HEK293T (cell line): ENCODE measurements at regions of chr5 and their contacts with region 1.

Region 1: DNA sequence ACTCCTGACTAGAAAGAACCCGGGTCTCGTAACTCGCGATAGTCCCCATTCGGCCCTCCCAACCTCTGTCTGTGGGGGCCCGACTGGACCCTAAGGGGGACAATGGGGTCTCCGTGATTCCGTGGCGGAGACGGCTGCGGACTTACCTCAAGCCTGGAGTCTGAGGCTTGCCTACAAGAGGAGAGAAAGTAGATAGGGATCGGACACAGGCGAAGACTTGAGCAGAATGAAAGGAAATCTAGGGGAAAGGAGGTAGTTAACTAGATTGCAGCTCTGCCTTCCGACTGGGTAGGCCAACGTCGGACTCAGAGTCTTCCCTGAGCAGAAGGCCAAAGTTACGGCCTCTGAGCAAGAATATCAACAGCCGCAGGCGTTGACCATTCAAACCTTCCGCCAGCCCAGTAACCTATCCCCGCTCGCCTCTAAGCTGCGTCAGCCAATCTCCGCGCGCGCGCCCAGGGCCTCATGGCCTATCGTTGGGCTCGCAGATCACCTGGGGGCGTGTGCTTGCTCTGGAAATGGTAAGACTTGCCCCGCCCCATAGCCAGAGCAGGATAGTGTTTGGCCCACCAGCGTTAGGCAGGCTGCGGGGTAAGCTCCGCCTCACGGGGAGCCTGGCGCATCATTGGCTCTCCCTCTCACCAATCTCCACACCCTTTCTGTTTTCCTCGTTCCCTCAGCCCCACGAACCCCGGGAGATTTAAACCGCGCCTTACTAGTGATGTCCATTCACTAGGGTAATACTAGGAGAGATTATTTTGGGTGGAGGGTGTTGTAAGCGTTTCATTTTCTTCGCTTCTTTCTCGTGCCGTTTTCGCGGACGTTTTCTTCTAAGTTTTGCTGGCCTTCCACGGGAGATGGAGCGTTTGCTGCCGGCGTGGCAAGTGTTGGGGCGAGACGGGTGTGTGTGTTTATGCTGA is at the start of gene CDC25C:
- DNase-seq: peak; percentile 94

Region 2: DNA sequence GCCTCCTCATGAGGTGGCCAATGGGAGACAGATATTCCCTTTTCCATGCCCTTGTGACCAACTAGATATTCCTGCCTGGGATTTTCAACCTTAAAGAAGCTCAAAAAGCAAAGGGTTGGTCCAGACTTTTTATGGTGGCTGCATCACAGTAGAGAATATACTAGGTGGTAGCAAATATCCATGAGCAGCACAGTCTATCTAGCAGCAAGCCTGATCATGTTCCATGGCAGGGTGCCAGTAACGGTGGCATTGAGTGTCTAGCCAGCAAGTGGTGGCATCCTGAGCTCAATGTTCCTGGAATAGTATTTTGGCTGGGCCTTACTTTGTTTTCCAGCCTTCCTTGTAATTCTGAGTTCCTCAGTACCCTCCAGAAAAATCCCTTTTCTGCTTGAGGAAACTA is 25.9 kb before region 1 on chr5:
- CTCF ChIA-PET with region 1: no interaction called
- POLR2A ChIA-PET with region 1: interaction called, 15 read pairs
- DNase-seq: no peak